IMR-90 (cell line): ENCODE measurements at regions of chr16 and their contacts with region 1.

Region 1: GRCh38 chr16:87571136-87571867 is 31.0 kb upstream of the JPH3 start:
- DNase-seq: peak; percentile 53
- ATAC-seq: peak; percentile 95
- H3K4me3 ChIP-seq: no peak overlapping the region
- H3K27ac ChIP-seq: no peak overlapping the region
- H3K4me1 ChIP-seq: peaks cover 2% of the 10 kb centered on the region; the same call in 1 of the 2 replicates
- H3K27me3 ChIP-seq: peaks cover 22% of the 10 kb centered on the region
- CTCF ChIP-seq: peak; percentile 64
- POLR2A ChIP-seq: no peak
- RAD21 ChIP-seq: peak; percentile 74

Region 2: DNA sequence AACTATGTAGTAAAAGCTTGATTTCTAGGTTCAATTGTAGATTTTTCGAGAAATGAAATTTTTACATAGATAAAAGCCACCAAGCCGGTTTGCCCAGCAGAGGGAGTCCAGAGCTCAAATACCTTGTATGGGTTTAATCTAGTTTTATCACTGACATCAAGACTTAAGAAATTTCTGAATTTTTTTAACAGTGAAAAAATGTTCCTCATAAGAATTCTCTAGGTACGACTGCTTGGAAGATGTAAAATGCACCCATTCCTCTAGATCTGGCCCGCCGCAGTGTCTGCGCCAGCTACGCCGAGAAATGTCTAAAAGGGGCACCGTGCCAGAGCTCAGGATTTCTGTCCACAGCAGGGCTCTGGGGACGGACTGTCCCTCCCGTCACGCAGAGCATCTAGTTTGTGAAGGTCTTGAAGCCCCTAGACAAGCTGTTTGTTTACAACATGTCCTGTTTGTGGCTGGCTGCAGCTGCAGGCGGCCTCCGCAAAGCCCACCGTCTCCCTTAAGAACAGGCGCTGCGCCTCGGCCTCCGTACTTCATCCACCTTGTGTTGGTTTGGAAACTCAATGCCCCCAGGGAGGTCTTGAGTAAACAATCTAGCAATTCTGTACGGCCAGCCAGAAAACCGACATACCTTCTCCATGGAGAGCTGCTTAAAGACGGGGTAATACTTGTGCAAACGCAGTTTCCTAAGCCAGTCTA is 154.3 kb before region 1 on chr16:
- CTCF ChIA-PET with region 1: interaction called, 10 read pairs
- POLR2A ChIA-PET with region 1: no interaction called
- dilution Hi-C with region 1: no loop called
- in situ Hi-C with region 1: loop called (anchors 10 kb)
- intact Hi-C with region 1: loop called (anchors 1 kb)
- DNase-seq: peak; percentile 72
- ATAC-seq: peak; percentile 65; the same call in 1 of the 2 replicates
- H3K4me3 ChIP-seq: no peak overlapping the region
- H3K27ac ChIP-seq: no peak overlapping the region
- H3K4me1 ChIP-seq: no peaks in the 10 kb centered on the region
- H3K27me3 ChIP-seq: no peaks in the 10 kb centered on the region
- CTCF ChIP-seq: peak; percentile 85
- POLR2A ChIP-seq: no peak
- RAD21 ChIP-seq: peak; percentile 85

Region 3: DNA sequence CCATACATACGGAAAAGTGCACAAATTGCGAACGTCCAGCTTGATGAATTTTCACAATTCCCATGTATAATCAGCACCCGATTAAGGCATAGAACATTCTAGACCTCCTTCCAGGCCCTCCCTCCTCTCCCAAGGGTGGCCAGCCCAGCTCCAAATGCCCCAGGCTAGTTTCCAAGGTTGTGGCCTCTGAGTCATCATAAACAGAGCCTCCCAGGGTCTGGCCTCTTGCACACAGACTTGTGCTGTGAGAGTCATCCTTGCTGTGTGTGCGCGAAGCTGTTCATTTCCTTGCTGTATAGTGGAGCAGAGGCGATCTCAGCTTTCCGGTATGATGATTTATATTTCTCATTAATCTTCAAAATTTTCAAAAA is 10.5 kb after region 1 on chr16:
- CTCF ChIA-PET with region 1: interaction called, 11 read pairs
- POLR2A ChIA-PET with region 1: no interaction called
- dilution Hi-C with region 1: no loop called
- in situ Hi-C with region 1: no loop called
- intact Hi-C with region 1: no loop called
- DNase-seq: peak; percentile 98
- ATAC-seq: peak; percentile 90
- H3K4me3 ChIP-seq: no peak overlapping the region
- H3K27ac ChIP-seq: peak overlapping the region; percentile 94
- H3K4me1 ChIP-seq: peaks cover 26% of the 10 kb centered on the region
- H3K27me3 ChIP-seq: peaks cover 3% of the 10 kb centered on the region; the same call in 1 of the 2 replicates
- CTCF ChIP-seq: no peak
- POLR2A ChIP-seq: no peak
- RAD21 ChIP-seq: no peak